Activated naive CD8-positive, alpha-beta T cell treated with anti-CD3 and anti-CD28 coated beads, Interleukin-2, amount 10 ng/mL, durations not matched to agents 7 days and 5 days (primary cell): ENCODE measurements at regions of chr12 and their contacts with region 1.

Region 1: GRCh38 chr12:113221181-113221997 is at the start of gene TPCN1:
- DNase-seq: peak; percentile 97
- ATAC-seq: peak; percentile 96
- H3K4me3 Mint-ChIP-seq: peak within 1 kb of the TSS; percentile 93
- H3K27ac Mint-ChIP-seq: peak within 1 kb of the TSS; percentile 96
- H3K4me1 Mint-ChIP-seq: peaks cover 34% of the 10 kb centered on the region
- H3K27me3 Mint-ChIP-seq: peaks cover 6% of the 10 kb centered on the region
- total RNA-seq, gene TPCN1: 29.9 to 32.0 TPM

Region 2: DNA sequence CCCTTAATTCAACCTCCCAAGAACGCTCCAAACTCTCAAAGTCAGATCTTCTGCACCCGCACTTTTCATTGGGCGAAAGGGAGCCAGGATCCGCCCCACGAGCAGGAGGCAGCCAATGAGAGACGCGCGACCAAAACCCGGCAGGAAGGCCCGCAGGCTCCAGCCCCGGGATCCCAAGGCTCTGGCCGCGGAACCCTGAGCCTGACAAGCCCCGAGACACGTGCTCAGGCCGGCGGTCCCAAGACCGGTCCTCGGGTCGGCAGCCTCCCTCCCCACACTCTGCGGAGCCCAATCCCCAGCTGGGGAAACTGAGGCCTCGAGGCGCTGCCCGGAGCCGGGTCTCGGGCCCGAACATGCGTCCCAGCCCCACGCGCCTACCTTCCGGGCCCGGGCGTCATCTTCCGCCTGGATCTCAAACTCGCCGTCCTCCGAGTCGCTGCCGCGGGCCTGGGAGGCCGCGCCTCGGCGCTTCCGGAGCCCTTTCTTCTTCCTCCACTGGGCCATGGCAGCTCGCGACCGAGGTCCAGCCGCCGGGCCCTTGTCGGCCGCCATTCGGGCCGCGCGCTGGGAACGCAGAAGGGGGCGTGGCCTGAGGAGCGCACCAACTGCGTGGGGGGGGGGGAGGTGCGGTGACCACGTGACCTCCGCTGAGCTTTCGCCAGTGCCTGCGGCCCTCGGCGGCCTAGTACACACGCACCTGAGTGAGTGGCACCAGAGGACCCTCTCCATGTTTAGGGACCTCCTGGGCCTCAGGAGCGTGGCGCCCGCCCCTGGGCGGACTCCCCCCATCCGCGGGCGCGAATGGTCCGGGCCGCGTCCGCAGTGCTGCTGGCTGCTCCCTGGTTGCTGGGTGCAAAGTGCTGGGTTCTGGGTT is 36.3 kb before region 1 on chr12 and contains the starts of genes DDX54 and RITA1:
- POLR2A ChIA-PET with region 1: interaction called, 16 read pairs
- DNase-seq: peak; percentile 89
- ATAC-seq: peak; percentile 87
- H3K4me3 Mint-ChIP-seq: peak within 1 kb of the TSS; percentile 89
- H3K27ac Mint-ChIP-seq: peak within 1 kb of the TSS; percentile 92
- H3K4me1 Mint-ChIP-seq: peaks cover 22% of the 10 kb centered on the region
- H3K27me3 Mint-ChIP-seq: no peaks in the 10 kb centered on the region
- total RNA-seq, gene DDX54: 70.1 to 74.2 TPM
- total RNA-seq, gene RITA1: 18.5 to 21.5 TPM

Region 3: DNA sequence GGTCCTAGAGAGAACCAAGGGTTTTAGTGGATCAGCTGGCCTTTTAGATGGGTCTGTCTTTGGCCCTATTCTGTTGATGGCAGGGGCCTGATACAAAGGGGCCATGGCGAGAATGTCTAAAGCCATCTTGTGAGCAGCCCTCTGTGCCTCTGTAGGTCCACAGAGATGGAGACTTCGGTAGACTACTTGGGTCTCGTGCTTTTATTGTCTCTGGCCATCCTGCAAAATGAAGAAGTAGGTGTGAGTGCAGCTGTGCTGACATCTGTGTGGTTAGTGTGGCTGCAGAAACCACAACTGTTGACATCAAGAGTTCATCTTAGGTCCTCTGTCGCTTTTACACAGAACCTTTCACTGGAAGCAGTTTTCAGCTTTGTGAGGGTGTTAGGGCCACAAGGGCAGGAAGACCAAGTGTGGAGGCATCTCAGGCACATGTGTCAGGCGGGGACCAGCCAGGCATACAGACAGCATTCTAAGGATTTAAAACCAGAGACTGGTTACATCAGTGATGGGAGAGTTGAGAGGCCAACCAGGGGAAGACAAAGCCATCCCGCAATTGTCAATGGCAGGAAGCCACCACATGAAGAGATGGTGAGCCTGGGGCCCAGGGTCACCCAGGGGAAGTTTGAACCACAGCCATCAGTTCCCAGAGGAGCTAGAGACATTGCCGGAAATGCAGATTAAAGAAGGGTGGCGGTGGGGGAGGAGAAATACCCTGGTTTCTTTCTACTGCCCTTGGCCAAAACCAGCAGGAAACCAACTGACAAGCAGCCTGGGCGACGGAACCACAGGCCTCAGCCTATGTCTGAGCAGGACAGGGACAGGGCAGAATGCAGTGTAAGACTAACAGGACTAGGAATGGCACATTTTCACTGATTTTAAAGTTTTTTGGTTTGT is 13.1 kb before region 1 on chr12:
- POLR2A ChIA-PET with region 1: interaction called, 24 read pairs
- DNase-seq: peak; percentile 72
- ATAC-seq: peak; percentile 88
- H3K4me3 Mint-ChIP-seq: peak overlapping the region; percentile 76
- H3K27ac Mint-ChIP-seq: peak overlapping the region; percentile 92
- H3K4me1 Mint-ChIP-seq: peaks cover 47% of the 10 kb centered on the region
- H3K27me3 Mint-ChIP-seq: peaks cover 2% of the 10 kb centered on the region

Region 4: DNA sequence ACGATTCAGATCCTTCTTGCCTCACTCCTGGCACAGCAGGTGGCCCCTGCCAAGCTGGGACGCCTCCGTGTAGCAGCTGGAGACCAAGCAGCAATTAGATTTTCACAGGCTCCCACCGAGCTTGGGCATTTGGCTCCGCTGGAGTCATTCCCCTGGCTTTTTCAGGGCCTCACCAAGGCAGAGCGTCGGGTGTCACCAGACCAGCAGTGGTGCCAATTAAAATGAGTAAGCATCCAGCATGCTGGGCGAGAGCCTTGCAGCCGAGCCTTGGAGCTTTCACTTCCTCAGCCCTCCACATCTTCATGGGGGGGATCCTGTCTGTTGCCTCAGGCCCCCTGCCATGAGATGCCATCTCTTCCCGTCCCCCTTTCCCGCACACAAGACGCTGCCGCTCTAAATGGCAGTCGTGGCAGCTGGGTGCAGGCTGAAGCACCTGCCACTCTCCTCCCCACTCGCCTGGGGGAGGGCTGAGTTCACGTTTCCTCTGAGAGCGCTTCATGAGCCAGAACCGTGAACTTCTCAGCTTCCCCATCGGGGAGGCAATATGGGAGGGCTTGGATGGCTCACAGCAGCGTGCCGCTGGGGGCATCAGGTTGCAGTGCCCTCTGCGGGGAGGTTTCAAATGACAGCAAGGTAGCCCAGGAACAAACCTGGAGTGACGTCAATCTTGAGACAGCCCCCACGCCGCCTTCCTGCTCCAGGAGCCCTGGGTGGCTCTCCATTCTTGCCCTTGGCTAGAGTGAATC is 11.6 kb after region 1 on chr12:
- POLR2A ChIA-PET with region 1: interaction called, 31 read pairs
- DNase-seq: peak; percentile 72
- ATAC-seq: peak; percentile 94
- H3K4me3 Mint-ChIP-seq: peak overlapping the region; percentile 89
- H3K27ac Mint-ChIP-seq: peak overlapping the region; percentile 97
- H3K4me1 Mint-ChIP-seq: peaks cover 44% of the 10 kb centered on the region
- H3K27me3 Mint-ChIP-seq: no peaks in the 10 kb centered on the region

Region 5: GRCh38 chr12:113261847-113262470 is 40.6 kb after region 1 on chr12:
- POLR2A ChIA-PET with region 1: interaction called, 13 read pairs
- DNase-seq: no peak
- ATAC-seq: peak; percentile 88
- H3K4me3 Mint-ChIP-seq: peak overlapping the region; percentile 71
- H3K27ac Mint-ChIP-seq: peak overlapping the region; percentile 92
- H3K4me1 Mint-ChIP-seq: peaks cover 48% of the 10 kb centered on the region
- H3K27me3 Mint-ChIP-seq: no peaks in the 10 kb centered on the region

Region 6: GRCh38 chr12:113276306-113276705 is 54.9 kb after region 1 on chr12:
- POLR2A ChIA-PET with region 1: no interaction called
- DNase-seq: no peak
- ATAC-seq: no peak
- H3K4me3 Mint-ChIP-seq: no peak overlapping the region
- H3K27ac Mint-ChIP-seq: no peak overlapping the region
- H3K4me1 Mint-ChIP-seq: peaks cover 8% of the 10 kb centered on the region
- H3K27me3 Mint-ChIP-seq: no peaks in the 10 kb centered on the region

Region 7: DNA sequence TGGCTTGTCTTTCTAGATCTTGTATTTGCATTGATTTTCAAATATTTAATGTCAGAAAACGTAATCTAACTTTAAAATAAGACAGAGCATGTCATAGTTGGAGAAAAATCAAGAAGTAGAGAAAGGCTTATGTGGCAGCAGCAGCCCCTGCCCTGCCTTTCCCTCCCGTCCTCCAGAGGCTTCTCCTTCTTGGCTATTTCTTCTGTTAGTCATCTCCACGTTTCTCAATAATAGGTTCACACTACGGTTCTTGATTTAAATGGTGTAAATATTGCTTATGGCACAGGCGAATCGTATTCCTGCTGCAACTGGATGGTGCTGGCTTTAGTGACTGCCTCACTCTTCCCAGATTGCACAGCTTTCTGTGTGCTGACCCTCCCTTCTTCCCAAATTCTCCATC is 70.7 kb after region 1 on chr12:
- POLR2A ChIA-PET with region 1: no interaction called
- DNase-seq: no peak
- ATAC-seq: no peak
- H3K4me3 Mint-ChIP-seq: no peak overlapping the region
- H3K27ac Mint-ChIP-seq: no peak overlapping the region
- H3K4me1 Mint-ChIP-seq: no peaks in the 10 kb centered on the region
- H3K27me3 Mint-ChIP-seq: no peaks in the 10 kb centered on the region